ENCODE measurements at regions of chr3 and their contacts with region 1.

Region 1: DNA sequence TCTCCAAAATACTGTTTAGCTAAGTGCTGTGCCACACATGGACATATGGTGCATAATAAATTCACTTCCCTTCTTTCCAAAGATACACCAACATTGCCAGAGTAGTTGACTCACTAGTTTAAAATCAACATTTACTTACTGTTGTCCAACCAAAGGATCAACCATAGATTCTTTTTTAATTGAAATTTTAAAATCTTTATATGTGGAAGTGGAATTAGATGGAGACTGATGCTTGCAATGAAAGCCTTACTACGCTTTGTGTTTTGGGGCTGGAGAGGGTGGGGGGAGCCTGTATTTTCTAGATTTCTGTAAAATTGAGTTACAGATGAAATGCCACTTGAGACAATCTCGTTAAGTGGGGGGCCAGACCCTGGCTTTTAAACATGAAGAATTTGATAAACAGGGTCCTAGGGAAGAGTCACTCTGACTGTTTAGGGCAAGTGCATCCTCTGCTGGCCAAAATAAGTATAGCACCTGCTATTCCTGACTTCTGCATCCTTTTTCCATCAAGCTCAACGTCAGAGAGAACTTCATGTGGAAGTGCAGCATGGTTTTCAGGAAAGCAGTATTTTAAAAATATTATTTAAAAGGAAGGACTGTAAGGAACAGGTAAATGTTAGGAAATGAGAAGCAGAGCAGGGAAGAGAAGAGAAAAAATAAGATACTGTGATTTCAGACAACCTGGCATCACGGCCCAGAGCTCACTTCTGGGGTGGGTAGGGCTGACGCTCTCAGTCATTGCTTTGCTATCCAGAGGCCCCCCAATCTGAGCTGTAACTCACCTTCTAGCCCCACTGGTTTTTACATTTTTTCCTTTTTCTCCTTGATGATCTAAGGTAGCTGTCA is 76.7 kb downstream of the BOC start:
- DNase-seq: peak in 5 of 10 donors; percentile 53 to 71 (median 59)

Region 2: DNA sequence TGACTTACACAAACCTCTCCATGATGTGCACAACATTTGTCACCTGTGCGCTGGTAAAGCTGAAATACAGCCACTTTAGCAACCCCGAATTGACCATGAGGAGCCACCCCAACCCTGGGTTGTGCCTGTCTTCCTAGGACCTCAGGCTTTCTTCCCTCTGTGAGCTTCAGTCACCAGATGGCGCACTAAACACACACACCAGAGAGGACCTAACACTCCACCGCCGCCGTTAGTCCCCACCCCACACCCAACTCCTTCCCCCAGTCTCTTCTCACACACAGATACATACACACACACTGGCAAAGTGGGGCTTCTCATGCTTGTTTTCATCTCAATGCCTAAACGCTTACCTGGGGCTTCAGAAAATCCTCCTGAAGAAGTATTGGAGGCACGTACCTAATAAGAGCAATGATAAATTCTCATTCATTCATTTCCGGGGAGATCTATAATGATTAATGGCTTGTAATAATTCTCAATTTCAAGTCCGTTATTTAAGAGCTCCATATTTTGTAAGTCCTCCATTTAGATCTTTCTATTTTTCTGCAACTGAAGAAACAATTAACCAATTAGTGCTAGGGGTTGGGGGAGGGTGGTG is 645.0 kb before region 1 on chr3:
- intact Hi-C with region 1: loop called (anchors 5 kb)
- DNase-seq: peak; percentile 58 to 95 (median 78)

Region 3: DNA sequence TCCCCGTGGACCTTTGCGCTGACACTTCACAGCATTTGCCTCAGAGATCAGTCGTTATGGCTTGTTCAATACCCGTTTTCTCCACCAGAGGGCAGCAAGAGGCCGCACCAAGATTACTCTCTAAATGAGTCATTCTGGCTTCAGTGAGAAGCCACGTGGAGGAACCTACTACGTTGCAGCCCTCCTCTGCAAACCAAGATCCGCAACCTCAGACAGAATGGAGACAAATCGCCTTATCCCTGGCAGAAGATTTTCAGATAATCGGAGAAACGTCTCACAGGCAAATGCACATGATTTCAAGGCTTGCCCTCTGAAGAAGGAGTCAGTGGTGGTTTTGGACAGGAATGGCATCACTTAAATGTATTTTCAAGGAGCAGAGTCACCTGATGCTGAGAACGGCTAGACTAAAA is 236.7 kb before region 1 on chr3:
- intact Hi-C with region 1: loop called (anchors 1 kb)
- DNase-seq: peak; percentile 63 to 97 (median 89)

Region 4: GRCh38 chr3:113136071-113136470 is 152.0 kb before region 1 on chr3:
- intact Hi-C with region 1: loop called (anchors 1 kb)
- DNase-seq: no peak

Region 5: DNA sequence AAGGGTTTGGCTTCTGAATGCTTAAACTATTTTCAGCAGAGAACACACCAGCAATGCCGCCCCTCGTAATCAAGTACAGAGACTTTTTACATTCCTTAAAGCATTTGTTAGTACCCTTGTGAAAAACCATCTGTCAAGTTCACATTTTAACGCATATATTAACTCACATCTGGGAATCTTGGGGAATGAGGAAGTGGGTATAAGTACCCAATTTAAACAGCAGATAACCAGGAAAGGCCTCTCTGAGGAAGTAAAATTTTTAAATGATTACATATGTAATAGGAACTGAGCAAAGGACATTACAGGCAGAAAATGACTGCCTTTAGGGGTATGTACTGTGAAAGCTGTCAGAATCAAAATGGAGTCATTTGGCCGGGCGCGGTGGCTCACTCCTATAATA is 166.0 kb after region 1 on chr3:
- intact Hi-C with region 1: no loop called
- DNase-seq: no peak

Region 6: GRCh38 chr3:113514265-113514769 is 226.3 kb after region 1 on chr3:
- intact Hi-C with region 1: no loop called
- DNase-seq: no peak

Measured in posterior cingulate gyrus (tissue), 11 donors.